T-cell (primary cell): ENCODE measurements at regions of chr5 and their contacts with region 1.

Region 1: GRCh38 chr5:141512390-141512910 is 23.6 kb downstream of the PCDHGC5 start:
- DNase-seq: peak; percentile 41 to 88 (median 74)
- ATAC-seq: peak; percentile 45 to 64 (median 53)
- H3K4me3 ChIP-seq: peak overlapping the region; percentile 50 to 86
- H3K4me3 Mint-ChIP-seq: peak overlapping the region; percentile 80 to 91 (median 86)
- H3K27ac ChIP-seq: no peak overlapping the region
- H3K27ac Mint-ChIP-seq: peak overlapping the region; percentile 34 to 80
- H3K4me1 ChIP-seq: peaks cover 3 to 37% of the 10 kb centered on the region in 2 experiments
- H3K4me1 Mint-ChIP-seq: peaks cover 27 to 41% (median 33%) of the 10 kb centered on the region in 3 donors
- H3K27me3 ChIP-seq: peaks cover 0 to 3% of the 10 kb centered on the region in 2 experiments
- H3K27me3 Mint-ChIP-seq: no peaks in the 10 kb centered on the region

Region 2: GRCh38 chr5:141369994-141370848 is 142.2 kb before region 1 on chr5 and contains the start of gene PCDHGB3:
- CTCF ChIA-PET with region 1: interaction called in 1 of 2 experiments, 10 read pairs
- POLR2A ChIA-PET with region 1: no interaction called
- DNase-seq: peak in 19 of 35 experiments; percentile 6 to 51 (median 25)
- ATAC-seq: peak in 3 of 4 experiments; percentile 52 to 85 (median 82)
- H3K4me3 ChIP-seq: peak within 1 kb of the TSS; percentile 12 to 58
- H3K4me3 Mint-ChIP-seq: peak within 1 kb of the TSS; percentile 66 to 80 (median 77)
- H3K27ac ChIP-seq: no peak within 1 kb of the TSS
- H3K27ac Mint-ChIP-seq: no peak within 1 kb of the TSS
- H3K4me1 ChIP-seq: peaks cover 0 to 7% of the 10 kb centered on the region in 2 experiments
- H3K4me1 Mint-ChIP-seq: peaks cover 7 to 9% (median 8%) of the 10 kb centered on the region in 3 donors
- H3K27me3 ChIP-seq: peaks cover 32 to 61% of the 10 kb centered on the region in 2 experiments
- H3K27me3 Mint-ChIP-seq: peaks cover 56 to 84% of the 10 kb centered on the region in 2 donors
- total RNA-seq, gene PCDHGB3: 0.20 to 0.85 (median 0.41) TPM

Region 3: DNA sequence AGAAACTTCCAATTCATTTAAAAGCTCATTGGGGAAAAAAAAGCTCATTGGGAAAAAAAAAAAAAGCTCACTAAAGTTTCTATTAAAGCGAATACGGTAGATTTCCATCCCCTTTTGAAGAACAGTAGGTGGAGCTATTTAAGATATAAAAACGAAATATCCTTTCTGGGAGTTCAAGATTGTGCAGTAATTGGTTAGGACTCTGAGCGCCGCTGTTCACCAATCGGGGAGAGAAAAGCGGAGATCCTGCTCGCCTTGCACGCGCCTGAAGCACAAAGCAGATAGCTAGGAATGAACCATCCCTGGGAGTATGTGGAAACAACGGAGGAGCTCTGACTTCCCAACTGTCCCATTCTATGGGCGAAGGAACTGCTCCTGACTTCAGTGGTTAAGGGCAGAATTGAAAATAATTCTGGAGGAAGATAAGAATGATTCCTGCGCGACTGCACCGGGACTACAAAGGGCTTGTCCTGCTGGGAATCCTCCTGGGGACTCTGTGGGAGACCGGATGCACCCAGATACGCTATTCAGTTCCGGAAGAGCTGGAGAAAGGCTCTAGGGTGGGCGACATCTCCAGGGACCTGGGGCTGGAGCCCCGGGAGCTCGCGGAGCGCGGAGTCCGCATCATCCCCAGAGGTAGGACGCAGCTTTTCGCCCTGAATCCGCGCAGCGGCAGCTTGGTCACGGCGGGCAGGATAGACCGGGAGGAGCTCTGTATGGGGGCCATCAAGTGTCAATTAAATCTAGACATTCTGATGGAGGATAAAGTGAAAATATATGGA is 81.9 kb before region 1 on chr5 and contains the start of gene PCDHGA12:
- CTCF ChIA-PET with region 1: interaction called in 1 of 2 experiments, 12 read pairs
- POLR2A ChIA-PET with region 1: interaction called in 1 of 2 experiments, 3 read pairs
- DNase-seq: no peak
- ATAC-seq: peak in 1 of 4 experiments; percentile 24
- H3K4me3 ChIP-seq: peak within 1 kb of the TSS in 1 of 2 donors; percentile 33
- H3K4me3 Mint-ChIP-seq: peak within 1 kb of the TSS; percentile 49 to 68 (median 68)
- H3K27ac ChIP-seq: no peak within 1 kb of the TSS
- H3K27ac Mint-ChIP-seq: peak within 1 kb of the TSS in 1 of 2 donors; percentile 15
- H3K4me1 ChIP-seq: peaks cover 0 to 11% of the 10 kb centered on the region in 2 experiments
- H3K4me1 Mint-ChIP-seq: peaks cover 6 to 17% (median 10%) of the 10 kb centered on the region in 3 donors
- H3K27me3 ChIP-seq: peaks cover 34 to 64% of the 10 kb centered on the region in 2 experiments
- H3K27me3 Mint-ChIP-seq: peaks cover 57 to 77% of the 10 kb centered on the region in 2 donors
- total RNA-seq, gene PCDHGA12: 0.09 to 0.53 (median 0.22) TPM in 4 of 5 donors, not detected in the other

Region 4: GRCh38 chr5:141441571-141442170 is 70.8 kb before region 1 on chr5:
- CTCF ChIA-PET with region 1: no interaction called
- POLR2A ChIA-PET with region 1: no interaction called
- DNase-seq: no peak
- ATAC-seq: no peak
- H3K4me3 ChIP-seq: no peak overlapping the region
- H3K4me3 Mint-ChIP-seq: no peak overlapping the region
- H3K27ac ChIP-seq: no peak overlapping the region
- H3K27ac Mint-ChIP-seq: no peak overlapping the region
- H3K4me1 ChIP-seq: no peaks in the 10 kb centered on the region
- H3K4me1 Mint-ChIP-seq: no peaks in the 10 kb centered on the region
- H3K27me3 ChIP-seq: peaks cover 2 to 11% of the 10 kb centered on the region in 2 experiments
- H3K27me3 Mint-ChIP-seq: peaks cover 24 to 41% of the 10 kb centered on the region in 2 donors

Region 5: DNA sequence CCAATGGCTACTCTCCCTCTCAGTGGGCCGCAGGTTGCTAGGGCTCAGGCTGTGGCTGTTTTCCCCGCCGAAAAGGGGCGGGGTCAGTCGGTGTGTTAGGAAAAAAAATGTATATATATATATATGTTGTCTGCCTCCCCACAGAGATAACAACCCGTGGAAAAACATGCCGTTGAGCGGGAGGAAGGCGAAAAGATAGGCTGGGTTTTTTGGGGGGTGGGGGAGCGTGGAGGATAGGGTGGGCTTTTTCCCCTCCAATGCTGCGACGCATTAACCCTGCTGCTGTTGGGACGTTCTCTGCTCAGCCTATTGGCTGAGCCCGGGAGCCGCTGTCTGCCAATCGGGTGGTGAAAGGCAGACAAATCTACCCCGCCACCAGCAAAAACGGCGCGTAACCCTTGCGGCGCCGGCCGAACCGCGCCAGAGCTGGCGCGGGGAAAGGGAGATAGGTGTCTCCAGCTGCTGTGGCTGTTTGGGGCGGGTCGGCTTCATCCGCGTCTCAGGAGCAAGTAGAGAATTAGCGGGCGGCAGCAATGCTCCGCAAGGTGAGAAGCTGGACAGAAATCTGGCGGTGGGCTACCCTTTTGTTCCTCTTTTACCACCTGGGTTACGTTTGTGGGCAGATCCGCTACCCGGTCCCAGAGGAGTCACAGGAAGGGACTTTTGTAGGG is 27.7 kb before region 1 on chr5 and contains the start of gene PCDHGC4:
- CTCF ChIA-PET with region 1: no interaction called
- POLR2A ChIA-PET with region 1: no interaction called
- DNase-seq: no peak
- ATAC-seq: peak in 1 of 4 experiments; percentile 12
- H3K4me3 ChIP-seq: peak within 1 kb of the TSS in 1 of 2 donors; percentile 77
- H3K4me3 Mint-ChIP-seq: peak within 1 kb of the TSS; percentile 9 to 59 (median 34)
- H3K27ac ChIP-seq: no peak within 1 kb of the TSS
- H3K27ac Mint-ChIP-seq: no peak within 1 kb of the TSS
- H3K4me1 ChIP-seq: peaks cover 3 to 14% of the 10 kb centered on the region in 2 experiments
- H3K4me1 Mint-ChIP-seq: peaks cover 11 to 22% (median 19%) of the 10 kb centered on the region in 3 donors
- H3K27me3 ChIP-seq: peaks cover 17 to 69% of the 10 kb centered on the region in 2 experiments
- H3K27me3 Mint-ChIP-seq: peaks cover 72 to 96% of the 10 kb centered on the region in 2 donors
- total RNA-seq, gene PCDHGC4: 0.18 to 0.51 TPM in 2 of 5 donors, not detected in the others

Region 6: GRCh38 chr5:141800617-141801016 is 288.2 kb after region 1 on chr5:
- CTCF ChIA-PET with region 1: no interaction called
- POLR2A ChIA-PET with region 1: no interaction called
- DNase-seq: no peak
- ATAC-seq: no peak
- H3K4me3 ChIP-seq: no peak overlapping the region
- H3K4me3 Mint-ChIP-seq: no peak overlapping the region
- H3K27ac ChIP-seq: no peak overlapping the region
- H3K27ac Mint-ChIP-seq: no peak overlapping the region
- H3K4me1 ChIP-seq: peaks cover 0 to 3% of the 10 kb centered on the region in 2 experiments
- H3K4me1 Mint-ChIP-seq: peaks cover 0 to 9% (median 4%) of the 10 kb centered on the region in 3 donors
- H3K27me3 ChIP-seq: peaks cover 5 to 42% of the 10 kb centered on the region in 2 experiments
- H3K27me3 Mint-ChIP-seq: peaks cover 27 to 33% of the 10 kb centered on the region in 2 donors